CD4-positive, alpha-beta memory T cell (primary cell): ENCODE measurements at regions of chr19 and their contacts with region 1.

Region 1: DNA sequence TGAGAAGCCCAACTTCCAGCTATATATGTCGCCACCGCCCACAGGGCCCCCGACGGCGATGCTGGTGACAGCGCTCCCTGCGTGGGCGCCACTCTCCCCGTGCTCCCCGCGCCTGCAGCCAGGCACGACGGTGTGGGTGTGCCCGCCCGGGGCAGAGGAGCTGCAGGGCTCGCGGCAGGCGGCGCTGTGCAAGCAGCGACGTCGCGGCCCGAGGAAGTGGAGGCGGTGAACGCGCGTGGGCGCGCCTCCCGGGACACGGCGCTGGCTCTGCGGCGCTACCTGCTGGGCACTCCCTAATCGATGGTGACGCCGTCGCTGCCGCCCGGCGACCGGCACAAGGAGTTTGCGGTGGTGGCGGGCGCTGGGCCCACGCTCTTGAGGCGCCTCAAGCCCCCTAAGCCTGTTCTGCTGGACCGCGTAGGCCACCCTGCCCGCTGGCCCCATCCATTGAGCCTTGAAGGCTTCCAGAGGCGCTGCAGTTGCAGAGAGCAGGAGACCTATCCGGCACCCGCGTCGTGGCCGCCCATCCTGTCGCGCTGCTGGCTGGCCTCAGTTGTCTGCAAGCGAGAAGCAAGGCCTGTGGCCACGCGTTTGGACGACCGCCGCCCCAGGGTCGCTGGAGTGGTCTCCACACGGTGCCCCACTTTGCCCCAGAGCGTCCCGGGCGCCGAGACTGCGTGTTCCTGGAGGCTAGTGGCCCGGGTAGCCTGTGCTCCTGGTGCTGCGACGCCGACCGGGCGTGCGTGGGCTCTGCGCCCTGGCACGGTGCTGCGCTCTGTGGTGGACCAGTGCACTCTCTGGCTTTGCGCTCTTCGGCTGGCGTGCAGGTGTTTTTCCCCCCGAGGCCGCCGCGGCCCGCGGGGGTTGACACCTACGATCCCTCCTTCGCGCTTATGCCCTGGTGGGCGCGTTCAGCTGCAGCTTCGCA is 23.1 kb downstream of the LRFN3 start:
- DNase-seq: peak; percentile 85 to 87 (median 87)
- H3K4me3 ChIP-seq: peak overlapping the region; percentile 52 to 72
- H3K4me3 Mint-ChIP-seq: peak overlapping the region; percentile 66 to 87 (median 80)
- H3K27ac ChIP-seq: peak overlapping the region; percentile 36
- H3K27ac Mint-ChIP-seq: peak overlapping the region in 5 of 7 donors; percentile 29 to 77 (median 60)
- H3K4me1 ChIP-seq: peaks cover 48% of the 10 kb centered on the region
- H3K4me1 Mint-ChIP-seq: peaks cover 21 to 56% (median 32%) of the 10 kb centered on the region in 4 donors
- H3K27me3 ChIP-seq: no peaks in the 10 kb centered on the region
- H3K27me3 Mint-ChIP-seq: peaks cover 0 to 3% of the 10 kb centered on the region in 2 donors

Region 2: DNA sequence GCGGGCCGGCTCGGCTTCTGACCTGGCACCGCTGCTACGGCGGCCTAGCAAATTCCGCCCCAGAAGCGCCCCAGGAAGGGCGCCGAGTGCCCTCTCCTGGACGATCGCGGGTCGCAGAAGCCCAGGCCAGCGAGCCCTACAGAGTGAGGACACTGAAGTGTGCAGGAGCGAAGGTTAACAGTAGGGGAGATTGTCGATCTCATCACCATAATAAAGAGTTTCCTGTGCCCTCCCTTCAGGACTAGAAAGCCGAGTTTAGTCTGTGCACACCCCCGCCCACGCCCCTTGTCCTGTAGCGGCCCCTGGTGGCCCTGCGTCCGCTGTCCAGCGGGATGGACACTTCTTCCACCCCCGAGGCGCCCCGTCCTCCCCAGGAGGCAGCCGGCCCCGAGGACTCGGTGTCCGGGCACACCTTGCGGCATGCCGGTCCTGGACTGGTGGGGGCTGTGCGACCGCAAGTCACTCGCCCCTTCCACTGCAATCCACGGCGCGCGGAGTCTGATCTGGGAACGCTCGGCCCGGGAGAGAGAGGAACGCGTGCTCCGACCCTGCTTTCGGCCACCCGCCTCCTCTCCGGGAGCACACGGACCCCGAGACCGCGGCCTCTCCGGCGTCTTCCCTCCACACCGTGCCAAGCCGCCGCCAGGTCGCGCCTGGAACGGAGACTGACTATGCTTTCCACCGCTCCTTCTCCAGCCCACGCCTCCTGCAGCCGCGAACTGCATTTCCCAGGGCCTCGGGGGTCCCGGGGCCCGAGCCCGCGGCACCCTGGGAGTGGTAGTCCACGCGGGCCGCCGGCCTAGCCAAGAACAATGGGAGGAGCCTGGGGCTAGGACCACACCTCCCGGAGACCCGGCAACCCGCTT is 242.3 kb before region 1 on chr19:
- CTCF ChIA-PET with region 1: no interaction called
- POLR2A ChIA-PET with region 1: no interaction called
- intact Hi-C with region 1: no loop called
- DNase-seq: peak; percentile 97 to 99 (median 98)
- H3K4me3 ChIP-seq: peak overlapping the region; percentile 68 to 81
- H3K4me3 Mint-ChIP-seq: peak overlapping the region; percentile 91 to 99 (median 94)
- H3K27ac ChIP-seq: peak overlapping the region; percentile 71
- H3K27ac Mint-ChIP-seq: peak overlapping the region; percentile 90 to 99 (median 94)
- H3K4me1 ChIP-seq: peaks cover 59% of the 10 kb centered on the region
- H3K4me1 Mint-ChIP-seq: peaks cover 44 to 72% (median 55%) of the 10 kb centered on the region in 4 donors
- H3K27me3 ChIP-seq: no peaks in the 10 kb centered on the region
- H3K27me3 Mint-ChIP-seq: no peaks in the 10 kb centered on the region

Region 3: GRCh38 chr19:35882114-35882832 is 77.0 kb before region 1 on chr19:
- CTCF ChIA-PET with region 1: interaction called, 11 read pairs
- POLR2A ChIA-PET with region 1: interaction called, 11 read pairs
- intact Hi-C with region 1: no loop called
- DNase-seq: peak; percentile 71 to 75 (median 72)
- H3K4me3 ChIP-seq: no peak overlapping the region
- H3K4me3 Mint-ChIP-seq: no peak overlapping the region
- H3K27ac ChIP-seq: no peak overlapping the region
- H3K27ac Mint-ChIP-seq: peak overlapping the region in 2 of 7 donors; percentile 57 to 72
- H3K4me1 ChIP-seq: peaks cover 13% of the 10 kb centered on the region
- H3K4me1 Mint-ChIP-seq: peaks cover 8 to 19% (median 9%) of the 10 kb centered on the region in 4 donors
- H3K27me3 ChIP-seq: peaks cover 14% of the 10 kb centered on the region
- H3K27me3 Mint-ChIP-seq: peaks cover 7 to 15% of the 10 kb centered on the region in 2 donors

Region 4: DNA sequence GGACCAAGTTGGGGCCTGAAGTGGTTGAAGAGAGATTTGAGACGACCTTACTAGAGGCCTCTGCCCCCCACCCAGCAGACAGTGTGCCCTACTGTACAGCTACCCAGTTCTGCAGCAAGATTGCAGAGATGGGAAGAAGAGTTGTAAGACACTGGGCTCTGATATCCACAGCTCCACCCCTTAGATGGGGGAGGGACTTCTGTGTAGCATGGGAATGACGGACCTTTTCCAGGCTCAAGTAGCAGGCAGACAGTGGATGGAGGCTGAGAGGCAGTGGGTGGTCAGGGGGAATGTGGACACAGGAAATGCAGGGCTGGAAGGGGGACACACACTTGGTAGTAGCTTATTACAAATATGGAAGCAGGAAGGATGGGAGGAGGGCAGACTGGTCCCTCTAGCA is 10.2 kb before region 1 on chr19:
- CTCF ChIA-PET with region 1: interaction called, 4 read pairs
- POLR2A ChIA-PET with region 1: interaction called, 18 read pairs
- intact Hi-C with region 1: no loop called
- DNase-seq: no peak
- H3K4me3 ChIP-seq: no peak overlapping the region
- H3K4me3 Mint-ChIP-seq: peak overlapping the region in 1 of 8 donors; percentile 39
- H3K27ac ChIP-seq: no peak overlapping the region
- H3K27ac Mint-ChIP-seq: peak overlapping the region in 6 of 7 donors; percentile 48 to 87 (median 78)
- H3K4me1 ChIP-seq: peaks cover 46% of the 10 kb centered on the region
- H3K4me1 Mint-ChIP-seq: peaks cover 39 to 77% (median 56%) of the 10 kb centered on the region in 4 donors
- H3K27me3 ChIP-seq: no peaks in the 10 kb centered on the region
- H3K27me3 Mint-ChIP-seq: no peaks in the 10 kb centered on the region

Region 5: DNA sequence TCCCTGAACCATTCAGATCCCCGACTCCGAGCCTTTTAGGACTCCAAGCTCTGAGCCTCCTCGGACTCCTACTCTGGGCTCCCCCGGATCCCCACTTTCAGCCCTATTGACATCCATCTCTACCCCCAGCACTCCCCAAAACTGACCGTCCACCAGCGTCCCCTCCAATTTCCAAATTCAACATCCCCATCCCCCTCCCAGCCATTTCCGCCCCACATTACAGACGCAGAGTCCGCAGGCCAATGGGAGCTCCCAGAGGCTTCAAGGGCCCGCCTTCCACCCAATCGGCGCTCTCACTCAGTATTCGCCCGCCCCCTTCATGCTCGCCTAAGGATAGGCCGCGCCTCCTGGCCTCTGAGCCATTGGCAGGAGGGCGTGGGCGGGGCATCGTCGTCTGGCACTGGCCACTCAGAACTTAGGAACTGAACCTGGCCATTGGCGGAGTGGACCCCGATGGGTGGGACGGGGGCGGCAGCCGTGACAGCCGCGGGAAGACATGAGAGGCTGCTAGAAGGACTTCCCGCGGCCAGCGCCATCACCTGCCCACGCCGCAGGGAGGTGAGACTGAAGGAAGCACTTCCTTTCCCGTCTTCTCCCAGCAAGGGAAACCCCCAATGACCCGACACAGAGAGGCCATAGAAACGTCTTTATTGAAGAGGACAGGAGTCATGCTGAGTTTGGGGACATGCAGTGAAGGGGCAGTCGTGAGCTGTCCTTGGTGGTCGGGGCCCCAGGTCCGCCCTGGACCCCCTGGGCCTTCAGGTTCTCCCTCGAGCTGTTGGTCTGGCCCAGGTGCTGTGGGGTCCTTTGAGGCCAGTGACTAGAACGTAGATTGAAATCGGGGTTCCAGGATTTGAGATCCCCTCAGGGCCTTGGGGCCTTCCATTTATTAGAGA is 55.0 kb after region 1 on chr19 and contains the start of gene ALKBH6:
- CTCF ChIA-PET with region 1: interaction called, 4 read pairs
- POLR2A ChIA-PET with region 1: interaction called, 6 read pairs
- intact Hi-C with region 1: loop called (anchors 1 kb)
- DNase-seq: peak; percentile 97 to 99 (median 98)
- H3K4me3 ChIP-seq: peak within 1 kb of the TSS; percentile 92
- H3K4me3 Mint-ChIP-seq: peak within 1 kb of the TSS; percentile 94 to 99 (median 94)
- H3K27ac ChIP-seq: peak within 1 kb of the TSS; percentile 74
- H3K27ac Mint-ChIP-seq: peak within 1 kb of the TSS; percentile 85 to 99 (median 98)
- H3K4me1 ChIP-seq: peaks cover 30% of the 10 kb centered on the region
- H3K4me1 Mint-ChIP-seq: peaks cover 25 to 50% (median 33%) of the 10 kb centered on the region in 4 donors
- H3K27me3 ChIP-seq: no peaks in the 10 kb centered on the region
- H3K27me3 Mint-ChIP-seq: no peaks in the 10 kb centered on the region
- total RNA-seq, gene ALKBH6: 50.9 to 51.0 TPM

Region 6: DNA sequence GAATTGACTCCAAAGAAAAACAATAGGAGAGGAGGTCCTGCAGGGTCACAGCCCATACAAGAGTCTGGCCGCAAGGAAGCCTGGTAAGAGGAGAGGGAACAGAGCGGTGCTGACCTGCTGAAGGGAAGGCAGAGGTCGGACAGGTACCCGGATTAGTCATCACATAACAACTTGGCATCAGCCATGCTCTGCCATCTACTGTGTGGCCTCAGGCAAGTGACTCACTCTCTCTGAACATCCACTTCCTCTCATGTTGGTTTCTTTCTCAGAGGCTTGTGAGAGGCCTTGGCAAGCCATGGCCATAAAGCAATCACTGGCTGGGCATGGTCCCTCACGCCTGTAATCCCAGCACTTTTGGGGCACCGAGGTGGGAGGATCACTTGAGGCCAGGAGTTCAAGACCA is 173.2 kb after region 1 on chr19:
- CTCF ChIA-PET with region 1: interaction called, 10 read pairs
- POLR2A ChIA-PET with region 1: no interaction called
- intact Hi-C with region 1: no loop called
- DNase-seq: peak in 2 of 5 donors; percentile 14 to 54
- H3K4me3 ChIP-seq: no peak overlapping the region
- H3K4me3 Mint-ChIP-seq: peak overlapping the region in 4 of 8 donors; percentile 40 to 59 (median 54)
- H3K27ac ChIP-seq: no peak overlapping the region
- H3K27ac Mint-ChIP-seq: peak overlapping the region; percentile 29 to 86 (median 78)
- H3K4me1 ChIP-seq: peaks cover 32% of the 10 kb centered on the region
- H3K4me1 Mint-ChIP-seq: peaks cover 15 to 50% (median 29%) of the 10 kb centered on the region in 4 donors
- H3K27me3 ChIP-seq: no peaks in the 10 kb centered on the region
- H3K27me3 Mint-ChIP-seq: no peaks in the 10 kb centered on the region